BJ (cell line): ENCODE measurements at regions of chr5 and their contacts with region 1.

Region 1: DNA sequence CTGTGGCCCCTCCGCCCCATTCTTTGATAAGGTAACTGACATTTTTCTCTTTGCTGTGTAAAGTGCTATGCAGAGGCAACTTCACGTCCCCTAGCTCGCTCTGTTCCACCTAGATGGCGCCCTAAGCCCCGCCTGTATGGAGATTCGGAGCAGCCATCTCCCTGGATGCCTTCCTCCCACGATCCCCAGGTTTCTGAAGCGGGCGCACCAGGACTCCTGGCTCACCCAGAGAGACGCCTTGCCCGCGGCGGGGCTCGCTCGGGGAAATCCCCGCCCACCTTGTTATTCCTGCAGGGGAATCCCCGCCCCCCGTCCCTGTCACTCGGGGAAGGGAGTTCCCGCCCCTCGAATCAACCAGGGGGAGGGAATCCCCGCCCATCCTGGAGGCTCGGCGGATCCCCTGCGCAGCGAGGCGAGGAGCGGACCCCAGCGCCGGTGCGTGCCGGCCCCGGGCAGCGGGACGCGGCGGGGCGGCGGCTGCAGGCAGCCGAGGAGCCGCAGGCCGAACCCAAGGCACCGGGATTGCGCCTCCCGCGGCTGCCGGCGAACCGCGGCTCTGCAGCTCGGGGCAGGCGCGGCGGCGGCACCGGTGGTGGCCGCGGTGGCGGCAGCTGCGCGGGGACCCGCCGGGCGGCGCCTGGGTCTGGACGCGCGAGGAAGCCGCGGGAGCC is at the start of gene PDZD2:
- DNase-seq: no peak
- H3K4me3 ChIP-seq: peak within 1 kb of the TSS; percentile 55
- H3K27me3 ChIP-seq: peaks cover 20% of the 10 kb centered on the region
- CTCF ChIP-seq: peak; percentile 57
- polyA plus RNA-seq, gene PDZD2: 0.06 TPM in 1 of 2 replicates, not detected in the other

Region 2: DNA sequence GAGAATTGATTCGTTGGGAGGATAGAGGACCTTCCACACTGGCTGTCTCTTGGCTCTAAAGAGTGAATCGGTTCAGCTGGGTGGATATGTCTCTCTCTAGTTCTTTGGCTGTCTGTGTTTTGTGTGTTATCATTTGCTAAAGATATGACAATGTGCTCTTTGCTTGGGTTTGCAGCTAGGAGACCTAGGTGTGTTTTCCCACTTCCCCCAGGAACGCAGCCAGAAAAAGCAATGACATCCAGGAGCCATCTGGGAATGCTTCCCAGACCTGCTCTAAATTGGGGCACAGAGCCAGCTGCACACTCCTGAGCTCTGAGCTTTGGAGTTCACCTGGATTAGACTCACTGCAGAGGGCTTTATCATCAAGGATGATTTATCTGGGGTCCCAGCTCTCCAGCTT is 12.7 kb before region 1 on chr5:
- CTCF ChIA-PET with region 1: interaction called, 15 read pairs
- POLR2A ChIA-PET with region 1: no interaction called
- DNase-seq: no peak
- H3K4me3 ChIP-seq: no peak overlapping the region
- H3K27me3 ChIP-seq: peaks cover 4% of the 10 kb centered on the region; the same call in 1 of the 2 replicates
- CTCF ChIP-seq: no peak